Dendritic cell treated with granulocyte-macrophage colony-stimulating factor and Interleukin-4, amounts not matched to agents 40 ng/mL and 50 ng/mL, for 4 days (primary cell): ENCODE measurements at regions of chr5 and their contacts with region 1.

Region 1: DNA sequence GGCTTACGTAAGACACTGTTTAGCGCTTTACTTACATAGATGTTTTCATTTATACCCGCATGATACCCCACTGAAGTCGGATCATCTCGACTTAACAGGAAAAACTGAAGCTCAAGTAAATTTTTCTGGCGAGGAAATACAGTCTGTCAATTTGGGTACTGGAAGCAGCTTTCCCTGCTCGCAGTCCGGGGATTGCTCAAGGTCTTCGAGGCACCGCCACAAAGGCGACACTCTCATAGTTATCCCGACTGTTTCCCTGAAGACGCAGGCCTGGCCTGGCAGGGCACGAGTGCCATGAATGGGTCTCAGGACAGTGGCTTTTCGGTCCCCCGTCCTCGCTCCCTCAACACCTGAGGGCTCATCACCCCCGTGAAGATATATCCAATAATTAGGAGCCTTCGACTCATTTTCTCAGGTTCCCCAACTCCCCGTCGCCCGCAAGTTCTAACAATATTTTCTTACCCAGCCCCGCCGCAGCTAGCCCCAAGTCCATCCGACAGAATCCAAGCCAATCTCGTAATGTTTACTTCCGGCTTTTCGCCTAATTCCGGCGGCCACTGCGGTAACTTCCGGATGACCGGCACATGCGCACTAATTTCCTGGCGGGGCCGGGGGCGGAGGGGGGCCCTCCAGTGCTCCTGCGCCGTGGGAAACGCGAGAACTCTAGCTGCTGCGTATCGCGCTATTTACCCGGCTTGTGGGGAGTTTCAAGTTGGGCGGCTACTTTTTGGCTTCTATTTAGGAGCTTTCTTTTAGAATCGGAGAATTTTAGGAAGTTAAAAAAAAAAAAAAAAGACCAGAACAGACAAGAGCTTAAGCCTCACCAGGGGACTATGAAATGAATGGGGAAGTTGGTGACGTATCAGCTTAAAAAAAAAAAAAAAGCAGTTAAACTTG is at the start of gene SLU7:
- H3K4me3 Mint-ChIP-seq: peak within 1 kb of the TSS; percentile 99
- H3K27ac Mint-ChIP-seq: peak within 1 kb of the TSS; percentile 96
- H3K4me1 Mint-ChIP-seq: peaks cover 51% of the 10 kb centered on the region
- H3K27me3 Mint-ChIP-seq: no peaks in the 10 kb centered on the region

Region 2: GRCh38 chr5:160399402-160400353 is 19.1 kb before region 1 on chr5 and contains the start of gene FAM200C:
- intact Hi-C with region 1: loop called (anchors 2 kb)
- H3K4me3 Mint-ChIP-seq: peak within 1 kb of the TSS; percentile 86
- H3K27ac Mint-ChIP-seq: peak within 1 kb of the TSS; percentile 90
- H3K4me1 Mint-ChIP-seq: peaks cover 5% of the 10 kb centered on the region
- H3K27me3 Mint-ChIP-seq: no peaks in the 10 kb centered on the region

Region 3: GRCh38 chr5:160467555-160468362 is 49.0 kb after region 1 on chr5:
- intact Hi-C with region 1: no loop called
- H3K4me3 Mint-ChIP-seq: peak overlapping the region; percentile 92
- H3K27ac Mint-ChIP-seq: peak overlapping the region; percentile 86
- H3K4me1 Mint-ChIP-seq: peaks cover 46% of the 10 kb centered on the region
- H3K27me3 Mint-ChIP-seq: peaks cover 2% of the 10 kb centered on the region

Region 4: DNA sequence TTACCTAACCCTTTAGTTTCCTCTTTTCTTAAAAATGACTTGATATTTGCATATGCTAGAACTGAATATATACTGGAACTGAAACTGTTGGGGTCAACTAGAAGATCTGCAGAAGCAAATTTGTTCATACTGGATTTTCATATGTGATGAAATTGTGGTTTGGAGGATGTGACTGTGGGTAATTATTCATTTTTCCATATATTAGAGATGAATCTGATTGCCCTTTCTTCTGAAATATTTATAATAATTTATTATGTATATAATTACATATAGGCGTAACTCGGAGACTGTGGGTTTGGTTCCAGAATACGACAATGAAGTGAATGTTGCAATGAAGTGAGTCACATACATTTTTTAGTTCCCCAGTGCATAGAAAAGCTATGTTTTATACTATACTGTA is 284.1 kb after region 1 on chr5:
- intact Hi-C with region 1: loop called (anchors 10 kb)
- H3K4me3 Mint-ChIP-seq: no peak overlapping the region
- H3K27ac Mint-ChIP-seq: no peak overlapping the region
- H3K4me1 Mint-ChIP-seq: peaks cover 40% of the 10 kb centered on the region
- H3K27me3 Mint-ChIP-seq: peaks cover 2% of the 10 kb centered on the region